ENCODE measurements at regions of chr17 and their contacts with region 1.

Region 1: GRCh38 chr17:7851438-7852256 is 3.2 kb upstream of the TMEM88 start:
- DNase-seq: peak; percentile 79 to 94 (median 90)
- H3K4me3 ChIP-seq: peak overlapping the region; percentile 18 to 68 (median 48)
- H3K27ac ChIP-seq: peak overlapping the region in 56 of 59 donors; percentile 2 to 82 (median 64)
- H3K27me3 ChIP-seq: no peaks in the 10 kb centered on the region
- CTCF ChIP-seq: peak; percentile 95 to 100 (median 99)

Region 2: DNA sequence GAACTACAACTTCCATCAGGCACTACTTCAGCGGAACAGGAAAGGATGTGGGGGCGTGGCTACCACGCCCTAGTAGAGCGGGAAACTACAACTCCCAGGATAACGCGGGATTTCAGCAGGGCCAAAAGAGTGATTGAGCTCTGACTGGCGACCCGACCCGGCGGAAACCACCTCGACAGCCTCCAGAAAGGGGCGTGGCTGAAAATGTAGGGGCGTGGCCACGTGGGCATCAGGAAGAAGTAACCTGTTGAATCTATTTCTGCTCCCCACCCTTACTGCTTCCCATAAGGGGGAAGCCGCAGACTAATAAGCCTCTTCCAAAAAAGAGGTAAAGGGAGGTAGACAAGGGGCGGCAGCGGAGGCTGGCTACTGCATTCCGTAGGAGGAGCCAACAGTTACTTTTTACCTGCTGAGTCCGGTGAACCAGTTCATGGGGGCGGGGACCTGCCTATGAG is 416.4 kb before region 1 on chr17 and contains the start of gene TMEM102:
- intact Hi-C with region 1: no loop called
- DNase-seq: peak; percentile 78 to 96 (median 92)
- H3K4me3 ChIP-seq: peak within 1 kb of the TSS in 58 of 59 donors; percentile 28 to 74 (median 52)
- H3K27ac ChIP-seq: peak within 1 kb of the TSS in 23 of 59 donors; percentile 5 to 79 (median 30)
- H3K27me3 ChIP-seq: peaks cover 0 to 58% (median 33%) of the 10 kb centered on the region in 45 donors
- CTCF ChIP-seq: peak in 21 of 56 donors; percentile 8 to 54 (median 19)
- total RNA-seq, gene TMEM102: 0.24 to 3.3 (median 0.97) TPM in 113 of 120 experiments, not detected in the others

Region 3: GRCh38 chr17:7740481-7741001 is 111.1 kb before region 1 on chr17:
- intact Hi-C with region 1: loop called (anchors 2 to 5 kb)
- DNase-seq: no peak
- H3K4me3 ChIP-seq: peak overlapping the region in 12 of 59 donors; percentile 2 to 47 (median 18)
- H3K27ac ChIP-seq: no peak overlapping the region
- H3K27me3 ChIP-seq: peaks cover 0 to 7% (median 0%) of the 10 kb centered on the region in 45 donors
- CTCF ChIP-seq: no peak

Region 4: GRCh38 chr17:7745748-7746470 is 105.7 kb before region 1 on chr17:
- intact Hi-C with region 1: loop called (anchors 2 to 5 kb)
- DNase-seq: peak in 1 of 10 donors; percentile 3
- H3K4me3 ChIP-seq: no peak overlapping the region
- H3K27ac ChIP-seq: no peak overlapping the region
- H3K27me3 ChIP-seq: peaks cover 0 to 5% (median 0%) of the 10 kb centered on the region in 45 donors
- CTCF ChIP-seq: no peak

Region 5: GRCh38 chr17:7803981-7804380 is 47.7 kb before region 1 on chr17:
- intact Hi-C with region 1: no loop called
- DNase-seq: no peak
- H3K4me3 ChIP-seq: no peak overlapping the region
- H3K27ac ChIP-seq: no peak overlapping the region
- H3K27me3 ChIP-seq: peaks cover 0 to 5% (median 0%) of the 10 kb centered on the region in 45 donors
- CTCF ChIP-seq: no peak

Region 6: DNA sequence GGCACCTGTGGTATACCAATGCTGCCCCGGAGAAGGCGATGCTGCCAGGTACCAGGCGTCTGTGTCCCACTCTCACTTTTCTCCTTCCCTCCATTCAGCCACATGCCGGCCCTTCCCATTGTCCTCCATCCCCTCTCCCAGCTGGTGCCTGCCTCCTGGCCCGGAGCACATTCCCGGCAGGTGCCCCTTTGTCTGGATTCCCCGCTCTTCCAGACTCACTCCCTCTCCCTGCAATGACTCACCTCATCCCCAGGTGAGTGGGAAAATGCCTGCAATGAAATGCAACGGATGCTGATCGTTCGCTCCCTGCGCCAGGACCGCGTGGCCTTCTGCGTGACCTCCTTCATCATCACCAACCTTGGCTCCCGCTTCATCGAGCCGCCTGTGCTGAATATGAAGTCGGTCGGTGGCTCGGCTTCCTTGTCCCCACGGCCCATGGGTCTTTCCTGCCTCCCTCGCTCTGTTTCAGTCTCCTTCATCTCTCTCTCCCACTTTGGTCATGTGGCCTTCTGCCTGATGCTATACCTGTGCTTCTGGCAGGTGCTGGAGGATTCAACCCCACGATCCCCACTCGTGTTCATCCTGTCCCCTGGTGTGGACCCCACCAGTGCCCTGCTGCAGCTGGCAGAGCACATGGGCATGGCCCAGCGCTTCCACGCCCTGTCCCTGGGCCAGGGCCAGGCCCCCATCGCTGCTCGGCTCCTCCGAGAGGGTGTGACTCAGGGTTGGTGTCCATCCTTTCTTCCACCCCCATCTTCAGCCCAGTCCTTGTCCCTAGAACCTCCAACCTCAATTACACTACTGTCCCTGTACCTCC is 27.9 kb before region 1 on chr17:
- intact Hi-C with region 1: loop called in 1 of 2 experiments (anchors 1 kb)
- DNase-seq: peak in 1 of 10 donors; percentile 32
- H3K4me3 ChIP-seq: no peak overlapping the region
- H3K27ac ChIP-seq: peak overlapping the region in 1 of 59 donors; percentile 61
- H3K27me3 ChIP-seq: no peaks in the 10 kb centered on the region
- CTCF ChIP-seq: no peak